Activated CD8-positive, alpha-beta memory T cell treated with anti-CD3 and anti-CD28 coated beads, Interleukin-2, amount 10 ng/mL, durations not matched to agents 7 days and 5 days (primary cell): ENCODE measurements at regions of chr3 and their contacts with region 1.

Region 1: GRCh38 chr3:5016218-5017161 is 37.3 kb downstream of the BHLHE40 start:
- DNase-seq: peak; percentile 83
- ATAC-seq: peak; percentile 70
- H3K4me3 Mint-ChIP-seq: no peak overlapping the region
- H3K27ac Mint-ChIP-seq: peak overlapping the region; percentile 85
- H3K4me1 Mint-ChIP-seq: peaks cover 94% of the 10 kb centered on the region
- H3K27me3 Mint-ChIP-seq: no peaks in the 10 kb centered on the region

Region 2: GRCh38 chr3:4751502-4752101 is 264.9 kb before region 1 on chr3:
- CTCF ChIA-PET with region 1: no interaction called
- DNase-seq: no peak
- ATAC-seq: no peak
- H3K4me3 Mint-ChIP-seq: no peak overlapping the region
- H3K27ac Mint-ChIP-seq: peak overlapping the region; percentile 1
- H3K4me1 Mint-ChIP-seq: peaks cover 67% of the 10 kb centered on the region
- H3K27me3 Mint-ChIP-seq: no peaks in the 10 kb centered on the region

Region 3: DNA sequence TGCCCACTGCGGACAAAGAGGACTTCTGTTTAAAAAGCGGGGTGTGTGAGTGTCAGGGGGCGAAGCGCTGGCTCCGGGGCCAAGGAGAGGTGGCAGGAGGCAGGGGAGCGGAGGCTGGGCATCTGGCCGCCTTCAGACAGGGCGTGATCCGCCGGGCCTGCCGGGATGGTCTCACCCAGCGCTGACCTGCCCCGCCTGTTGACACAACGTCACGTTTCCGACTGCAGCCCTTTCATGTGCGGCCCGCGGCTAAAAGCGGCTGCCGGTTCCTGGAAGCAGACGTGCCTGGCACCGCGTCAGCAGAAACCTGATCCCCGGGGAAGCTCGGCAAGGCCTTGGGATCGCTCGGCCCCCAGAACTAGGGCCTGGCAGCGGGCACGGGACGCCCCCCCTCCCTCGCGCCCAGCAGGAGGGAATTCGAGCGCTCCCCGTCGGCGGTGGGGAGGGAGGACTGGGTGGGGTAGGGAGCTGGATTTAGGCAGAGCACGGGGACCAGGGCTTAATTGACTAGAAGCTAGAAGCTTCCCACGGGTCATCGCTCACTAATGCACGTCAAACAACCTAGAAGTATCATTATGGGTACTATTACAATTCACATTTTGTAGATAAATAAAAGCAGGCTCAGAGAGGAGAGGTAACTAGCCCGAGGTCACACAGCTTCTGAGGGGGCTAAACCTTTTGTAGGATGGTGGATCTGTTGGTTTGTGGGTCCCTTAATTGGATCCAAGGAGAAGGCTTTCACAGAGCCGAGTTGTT is 29.5 kb before region 1 on chr3:
- CTCF ChIA-PET with region 1: interaction called, 212 read pairs
- DNase-seq: peak; percentile 92
- ATAC-seq: peak; percentile 75
- H3K4me3 Mint-ChIP-seq: peak overlapping the region; percentile 93
- H3K27ac Mint-ChIP-seq: peak overlapping the region; percentile 92
- H3K4me1 Mint-ChIP-seq: peaks cover 69% of the 10 kb centered on the region
- H3K27me3 Mint-ChIP-seq: no peaks in the 10 kb centered on the region

Region 4: DNA sequence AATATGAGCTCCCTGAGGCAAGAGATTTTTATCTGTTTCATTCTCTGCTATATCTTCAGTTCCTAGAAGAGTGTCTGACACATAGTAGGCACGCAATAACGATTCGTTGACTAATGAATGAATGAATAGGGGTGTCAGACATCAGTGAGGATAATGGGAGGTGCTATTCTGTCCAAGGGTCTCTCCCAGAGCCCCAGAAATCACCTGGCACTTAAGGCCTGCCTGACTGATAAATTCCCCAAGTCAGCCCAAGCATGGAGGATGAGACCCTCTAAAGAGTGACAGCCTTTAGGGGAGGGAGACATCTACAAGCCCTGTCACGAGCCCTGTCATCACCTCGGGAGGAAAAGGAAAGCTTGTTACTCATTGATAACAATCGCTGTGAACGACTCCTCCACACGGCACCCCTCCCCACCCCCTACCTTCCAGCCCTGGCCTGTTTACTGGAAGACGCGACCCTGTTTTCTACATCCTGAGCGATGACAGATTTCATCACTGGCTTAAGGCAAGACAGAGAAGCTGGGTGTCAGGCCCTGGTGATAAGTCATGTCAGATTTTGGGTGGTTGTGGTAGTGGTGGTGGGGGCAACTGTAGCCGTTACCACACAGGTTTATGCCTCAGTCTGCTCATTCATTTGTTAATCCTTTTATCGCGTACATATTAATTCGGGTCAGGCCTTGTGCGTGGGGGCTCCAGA is 14.2 kb before region 1 on chr3:
- CTCF ChIA-PET with region 1: interaction called, 24 read pairs
- DNase-seq: peak; percentile 92
- ATAC-seq: peak; percentile 77
- H3K4me3 Mint-ChIP-seq: peak overlapping the region; percentile 31
- H3K27ac Mint-ChIP-seq: peak overlapping the region; percentile 90
- H3K4me1 Mint-ChIP-seq: peaks cover 80% of the 10 kb centered on the region
- H3K27me3 Mint-ChIP-seq: no peaks in the 10 kb centered on the region

Region 5: GRCh38 chr3:5026331-5027218 is 10.1 kb after region 1 on chr3:
- CTCF ChIA-PET with region 1: interaction called, 21 read pairs
- DNase-seq: peak; percentile 85
- ATAC-seq: peak; percentile 70
- H3K4me3 Mint-ChIP-seq: peak overlapping the region; percentile 74
- H3K27ac Mint-ChIP-seq: peak overlapping the region; percentile 87
- H3K4me1 Mint-ChIP-seq: peaks cover 64% of the 10 kb centered on the region
- H3K27me3 Mint-ChIP-seq: no peaks in the 10 kb centered on the region